ENCODE measurements at regions of chr17 and their contacts with region 1.

Region 1: DNA sequence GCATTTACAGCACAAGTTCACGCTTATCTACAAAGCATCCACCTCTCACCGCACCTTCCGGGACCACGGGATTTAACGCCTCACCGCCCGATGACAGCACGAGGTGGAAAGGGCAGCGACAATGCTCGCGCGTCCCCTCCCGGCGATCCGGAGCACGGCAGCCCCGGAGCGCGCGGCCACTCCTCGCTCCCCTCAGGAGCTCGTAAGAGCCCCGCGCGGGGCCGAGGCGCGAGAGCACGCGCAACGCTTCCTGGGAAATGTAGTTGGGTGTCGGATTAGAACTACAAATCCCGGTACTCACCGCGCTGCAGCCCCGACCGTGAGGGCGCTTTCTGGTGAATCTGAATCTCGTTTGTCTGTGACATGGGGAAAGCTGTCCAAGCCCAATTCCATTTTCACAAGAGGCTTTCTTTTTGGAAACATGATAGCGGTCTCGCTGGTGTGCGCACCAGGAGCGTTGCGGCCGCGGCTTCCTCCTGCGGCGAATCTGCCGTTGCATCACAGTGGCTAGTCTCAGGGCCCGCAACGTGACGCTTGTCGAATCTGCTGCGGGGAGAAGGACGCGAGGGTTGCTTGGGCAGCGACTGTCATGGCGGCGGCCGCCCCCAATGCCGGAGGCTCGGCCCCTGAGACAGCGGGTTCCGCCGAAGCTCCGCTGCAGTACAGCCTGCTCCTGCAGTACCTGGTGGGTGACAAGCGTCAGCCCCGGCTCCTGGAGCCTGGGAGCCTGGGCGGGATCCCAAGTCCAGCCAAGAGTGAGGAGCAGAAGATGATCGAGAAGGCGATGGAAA is at the start of gene TIMM22:
- H3K4me3 ChIP-seq: peak within 1 kb of the TSS; percentile 67
- H3K27ac ChIP-seq: peak within 1 kb of the TSS; percentile 93
- H3K4me1 ChIP-seq: peaks cover 14% of the 10 kb centered on the region
- CTCF ChIP-seq: peak; percentile 99

Region 2: GRCh38 chr17:409848-410545 is 586.8 kb before region 1 on chr17:
- CTCF ChIA-PET with region 1: interaction called, 19 read pairs
- POLR2A ChIA-PET with region 1: interaction called, 4 read pairs
- H3K4me3 ChIP-seq: peak overlapping the region; percentile 45
- H3K27ac ChIP-seq: peak overlapping the region; percentile 70; the same call in 1 of the 2 replicates
- H3K4me1 ChIP-seq: peaks cover 6% of the 10 kb centered on the region
- CTCF ChIP-seq: peak; percentile 76

Region 3: GRCh38 chr17:781805-782731 is 214.7 kb before region 1 on chr17 and contains the starts of genes GLOD4 and MRM3:
- CTCF ChIA-PET with region 1: interaction called, 4 read pairs
- POLR2A ChIA-PET with region 1: interaction called, 11 read pairs
- H3K4me3 ChIP-seq: peak within 1 kb of the TSS; percentile 88
- H3K27ac ChIP-seq: peak within 1 kb of the TSS; percentile 75
- H3K4me1 ChIP-seq: peaks cover 7% of the 10 kb centered on the region
- CTCF ChIP-seq: peak; percentile 87

Region 4: GRCh38 chr17:986322-986929 is 10.3 kb before region 1 on chr17:
- CTCF ChIA-PET with region 1: interaction called, 24 read pairs
- POLR2A ChIA-PET with region 1: interaction called, 21 read pairs
- H3K4me3 ChIP-seq: no peak overlapping the region
- H3K27ac ChIP-seq: no peak overlapping the region
- H3K4me1 ChIP-seq: no peaks in the 10 kb centered on the region
- CTCF ChIP-seq: no peak

Region 5: DNA sequence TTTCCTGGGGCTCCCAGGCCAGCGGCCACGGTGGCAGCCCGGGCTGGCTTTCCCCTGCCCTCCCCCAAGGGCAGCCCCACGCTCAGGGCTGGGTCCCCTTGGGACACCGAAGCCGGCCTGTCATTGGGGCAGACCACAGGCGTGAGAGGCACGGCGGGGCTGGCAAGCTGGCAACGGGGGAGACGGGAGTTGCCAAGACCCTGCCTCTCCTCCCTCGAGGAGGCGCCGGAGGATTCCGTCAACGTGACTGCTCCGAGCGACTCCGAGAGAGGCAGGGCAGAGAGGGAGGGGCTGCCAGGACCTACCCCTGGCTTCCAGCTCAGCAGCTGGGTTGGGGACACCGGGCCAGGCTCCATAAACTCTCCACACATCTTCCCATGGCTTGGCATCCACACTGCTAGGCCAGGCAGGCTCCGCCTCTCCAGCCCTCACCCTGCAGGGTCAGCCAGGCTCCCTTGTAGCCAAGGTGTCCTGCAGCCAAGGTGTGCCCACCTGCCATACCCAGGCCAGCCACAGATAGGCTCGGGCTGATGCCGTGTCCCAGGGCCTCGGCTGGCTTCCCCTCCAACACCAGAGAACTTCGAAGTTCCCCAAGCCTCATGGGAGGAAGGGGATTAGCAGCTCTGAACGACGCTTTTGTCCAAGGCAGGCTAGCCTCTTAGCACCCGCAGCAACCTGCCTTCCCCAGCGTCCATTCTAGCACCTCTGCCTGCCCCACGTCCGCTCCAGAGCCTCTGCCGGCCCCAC is 25.7 kb after region 1 on chr17:
- CTCF ChIA-PET with region 1: no interaction called
- POLR2A ChIA-PET with region 1: no interaction called
- H3K4me3 ChIP-seq: no peak overlapping the region
- H3K27ac ChIP-seq: no peak overlapping the region
- H3K4me1 ChIP-seq: no peaks in the 10 kb centered on the region
- CTCF ChIP-seq: no peak

Region 6: DNA sequence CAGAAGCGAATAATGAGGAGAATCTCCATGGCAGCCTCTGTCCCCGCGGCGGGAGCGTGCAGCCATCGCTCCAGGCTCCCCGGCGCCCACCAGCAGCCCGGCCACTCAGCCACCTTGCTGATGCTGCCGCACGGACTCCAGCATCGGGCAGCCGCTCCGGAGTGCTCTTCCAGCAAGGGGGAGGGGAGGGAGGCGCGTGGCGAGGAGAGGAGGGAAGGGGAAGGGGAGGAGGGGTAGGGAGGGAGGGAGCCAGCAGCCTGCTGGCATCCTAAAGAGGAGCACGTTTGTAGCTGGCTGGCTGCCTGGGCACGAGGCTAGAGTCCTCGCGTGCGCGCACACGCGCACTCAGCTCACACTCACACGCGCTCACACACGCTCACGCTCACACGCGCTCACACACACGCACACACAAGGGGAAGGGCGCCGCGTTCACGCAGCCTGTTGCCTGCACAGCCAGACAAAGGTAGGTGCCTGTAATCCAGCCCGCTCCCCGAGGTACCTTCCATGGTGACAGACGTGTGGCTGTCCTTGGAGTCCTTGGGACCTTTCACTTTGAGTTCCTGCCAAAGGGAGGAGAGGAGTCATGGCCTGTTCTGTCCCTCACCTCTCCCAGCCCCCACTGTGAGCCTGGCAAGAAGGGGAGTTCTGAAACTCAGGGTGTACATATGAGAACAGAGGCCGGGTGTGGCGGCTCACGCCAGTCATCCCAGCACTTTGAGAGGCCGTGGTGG is 82.2 kb after region 1 on chr17:
- CTCF ChIA-PET with region 1: no interaction called
- POLR2A ChIA-PET with region 1: no interaction called
- H3K4me3 ChIP-seq: no peak overlapping the region
- H3K27ac ChIP-seq: no peak overlapping the region
- H3K4me1 ChIP-seq: peaks cover 15% of the 10 kb centered on the region
- CTCF ChIP-seq: no peak

Region 7: DNA sequence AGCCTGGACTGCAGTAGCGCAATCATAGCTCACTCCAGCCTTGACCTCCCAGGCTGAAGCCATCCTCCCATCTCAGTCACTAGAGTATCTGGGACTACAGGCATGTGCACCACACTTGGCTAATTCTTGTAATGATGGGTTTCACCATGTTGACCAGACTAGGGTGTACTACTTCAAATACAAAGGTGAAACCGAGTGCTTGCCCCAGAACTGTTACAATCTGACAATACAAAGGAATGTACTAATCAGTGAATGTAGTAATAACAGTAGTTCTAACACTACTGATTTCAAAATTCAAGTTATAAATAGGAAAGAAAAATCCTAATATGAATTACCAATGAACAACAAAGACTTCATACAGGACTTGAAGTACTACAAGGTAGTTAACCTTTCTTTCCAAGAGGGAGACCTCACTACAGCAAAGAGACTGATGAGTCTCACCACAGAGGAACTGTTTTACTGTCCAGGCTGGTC is 434.9 kb after region 1 on chr17:
- CTCF ChIA-PET with region 1: no interaction called
- POLR2A ChIA-PET with region 1: interaction called, 15 read pairs
- H3K4me3 ChIP-seq: no peak overlapping the region
- H3K27ac ChIP-seq: peak overlapping the region; percentile 24; the same call in 1 of the 2 replicates
- H3K4me1 ChIP-seq: no peaks in the 10 kb centered on the region; the same call in 1 of the 2 replicates
- CTCF ChIP-seq: no peak